Activated naive CD4-positive, alpha-beta T cell treated with anti-CD3 and anti-CD28 coated beads for 36 hours (primary cell): ENCODE measurements at regions of chr15 and their contacts with region 1.

Region 1: GRCh38 chr15:52790162-52790708 is at the start of gene ONECUT1:
- DNase-seq: peak; percentile 50
- H3K4me3 Mint-ChIP-seq: peak within 1 kb of the TSS; percentile 66
- H3K27ac Mint-ChIP-seq: no peak within 1 kb of the TSS
- H3K4me1 Mint-ChIP-seq: peaks cover 16% of the 10 kb centered on the region
- H3K27me3 Mint-ChIP-seq: peaks cover 81% of the 10 kb centered on the region
- total RNA-seq, gene ONECUT1: not detected

Region 2: DNA sequence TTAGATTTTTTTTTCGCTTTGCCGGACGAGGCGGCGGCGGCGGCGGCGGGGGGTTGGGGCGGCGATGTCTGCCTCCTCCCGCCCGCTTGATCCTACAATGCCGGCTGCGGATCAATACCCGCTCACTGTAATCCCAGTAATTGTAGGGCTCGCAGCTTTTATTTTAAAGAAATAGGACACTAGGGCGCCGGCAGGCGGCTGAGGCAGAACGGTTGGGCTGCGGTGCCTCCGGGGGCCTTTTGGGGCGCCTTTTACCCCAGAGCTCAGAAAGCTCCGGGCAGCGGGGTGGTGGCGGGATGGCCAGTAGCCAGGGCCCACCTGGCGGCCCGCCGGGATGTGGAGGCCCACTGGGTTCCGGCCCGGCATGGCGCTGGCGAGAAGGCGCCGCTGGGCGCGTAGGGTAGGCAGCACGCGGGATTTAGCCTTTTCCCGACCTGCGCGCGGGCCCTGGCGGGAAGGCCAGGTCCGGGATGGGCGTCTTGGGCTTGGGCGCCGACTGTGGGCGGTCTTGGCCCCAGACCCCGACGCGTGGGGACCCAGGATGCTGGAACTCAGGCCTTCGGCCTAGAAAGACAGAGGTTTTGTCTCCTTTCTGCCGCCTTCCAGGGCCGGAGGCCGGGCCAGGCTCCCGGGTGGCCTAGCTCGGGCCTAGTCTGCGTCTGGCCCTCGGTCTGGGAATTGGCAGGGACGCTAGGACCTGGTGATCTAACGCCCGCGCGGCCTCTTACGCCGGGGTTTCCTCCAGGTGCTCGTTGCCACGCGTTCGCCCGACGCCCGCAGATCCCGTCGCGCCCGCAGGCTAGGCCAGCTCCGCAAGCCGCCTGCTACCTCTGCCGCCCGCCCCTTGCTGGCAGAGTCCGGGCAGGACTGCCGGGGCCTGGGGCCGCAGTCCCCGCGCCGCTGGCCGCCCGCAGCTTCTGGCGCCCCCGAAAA is 15.4 kb after region 1 on chr15:
- CTCF ChIA-PET with region 1: interaction called, 4 read pairs
- intact Hi-C with region 1: loop called (anchors 1 kb)
- DNase-seq: no peak
- H3K4me3 Mint-ChIP-seq: peak overlapping the region; percentile 39
- H3K27ac Mint-ChIP-seq: no peak overlapping the region
- H3K4me1 Mint-ChIP-seq: peaks cover 17% of the 10 kb centered on the region
- H3K27me3 Mint-ChIP-seq: peaks cover 66% of the 10 kb centered on the region

Region 3: DNA sequence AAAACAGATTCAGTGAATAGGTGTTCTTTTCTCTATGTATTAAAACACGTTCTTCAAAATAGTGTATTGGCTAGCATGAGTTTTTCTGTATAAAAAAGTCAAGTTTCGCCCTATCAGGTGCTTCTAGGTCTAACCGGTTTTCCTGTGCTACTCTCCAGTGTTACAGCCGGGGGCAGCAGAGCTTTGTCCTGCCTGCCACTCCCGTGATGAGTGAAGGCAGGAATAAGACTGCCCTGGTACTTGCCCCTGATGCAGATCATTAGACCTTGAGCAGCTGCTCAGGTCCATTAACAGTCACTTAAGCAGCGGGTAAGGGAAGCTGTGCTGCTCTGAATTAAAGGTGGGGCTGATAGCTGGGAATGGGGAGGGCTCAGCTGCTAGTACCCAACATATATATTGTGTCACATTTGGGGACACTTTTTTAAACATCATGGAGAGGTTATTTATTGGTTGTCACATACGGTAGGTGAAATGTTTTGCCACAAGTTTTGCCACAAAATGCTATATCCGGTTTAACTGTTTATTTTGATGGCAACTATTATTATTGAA is 1186.7 kb after region 1 on chr15:
- CTCF ChIA-PET with region 1: no interaction called
- intact Hi-C with region 1: loop called (anchors 5 kb)
- DNase-seq: no peak
- H3K4me3 Mint-ChIP-seq: no peak overlapping the region
- H3K27ac Mint-ChIP-seq: no peak overlapping the region
- H3K4me1 Mint-ChIP-seq: peaks cover 9% of the 10 kb centered on the region
- H3K27me3 Mint-ChIP-seq: peaks cover 33% of the 10 kb centered on the region